ENCODE measurements at regions of chr1 and their contacts with region 1.

Region 1: GRCh38 chr1:89483010-89483756 is 41.4 kb upstream of the LRRC8B start:
- DNase-seq: peak; percentile 74
- ATAC-seq: peak; percentile 82
- H3K4me3 Mint-ChIP-seq: no peak overlapping the region
- H3K27ac Mint-ChIP-seq: no peak overlapping the region
- H3K4me1 Mint-ChIP-seq: no peaks in the 10 kb centered on the region
- H3K27me3 Mint-ChIP-seq: no peaks in the 10 kb centered on the region; the same call in 1 of the 2 replicates
- CTCF ChIP-seq: peak; percentile 60

Region 2: DNA sequence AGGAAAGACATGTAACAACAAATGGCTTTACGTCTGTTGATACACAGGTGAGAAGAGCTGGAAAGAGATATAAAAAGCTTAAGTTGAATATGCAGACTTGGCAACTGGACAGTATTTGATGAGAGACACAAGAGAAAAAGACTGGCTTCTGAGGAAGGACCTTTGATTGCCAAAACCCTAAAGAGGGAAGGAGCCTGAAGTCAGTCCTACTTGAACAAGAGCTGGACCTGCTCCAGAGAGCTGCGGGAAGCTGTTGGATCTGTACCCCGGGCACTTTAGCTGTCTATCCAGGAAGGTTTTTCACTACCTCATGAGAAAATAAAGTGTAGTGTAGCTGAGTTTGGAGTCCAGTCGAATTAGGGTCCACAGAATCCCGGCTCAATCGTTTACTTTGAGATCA is 16.1 kb after region 1 on chr1:
- CTCF ChIA-PET with region 1: interaction called, 11 read pairs
- POLR2A ChIA-PET with region 1: no interaction called
- DNase-seq: no peak
- ATAC-seq: no peak
- H3K4me3 Mint-ChIP-seq: no peak overlapping the region
- H3K27ac Mint-ChIP-seq: no peak overlapping the region
- H3K4me1 Mint-ChIP-seq: no peaks in the 10 kb centered on the region
- H3K27me3 Mint-ChIP-seq: no peaks in the 10 kb centered on the region
- CTCF ChIP-seq: no peak